ENCODE measurements at regions of chr18 and their contacts with region 1.

Region 1: GRCh38 chr18:31634331-31634713 is 42.6 kb downstream of the TTR start:
- DNase-seq: no peak
- H3K4me3 ChIP-seq: no peak overlapping the region
- H3K27ac ChIP-seq: no peak overlapping the region
- H3K4me1 ChIP-seq: no peaks in the 10 kb centered on the region
- H3K27me3 ChIP-seq: no peaks in the 10 kb centered on the region
- CTCF ChIP-seq: no peak
- POLR2A ChIP-seq: no peak

Region 2: GRCh38 chr18:29726646-29727045 is 1907.7 kb before region 1 on chr18:
- intact Hi-C with region 1: loop called (anchors 10 kb)
- DNase-seq: no peak
- H3K4me3 ChIP-seq: no peak overlapping the region
- H3K27ac ChIP-seq: no peak overlapping the region
- H3K4me1 ChIP-seq: no peaks in the 10 kb centered on the region
- H3K27me3 ChIP-seq: no peaks in the 10 kb centered on the region
- CTCF ChIP-seq: no peak
- POLR2A ChIP-seq: no peak

Region 3: GRCh38 chr18:31274915-31275314 is 359.4 kb before region 1 on chr18:
- intact Hi-C with region 1: no loop called
- DNase-seq: peak in 1 of 2 donors; percentile 18
- H3K4me3 ChIP-seq: no peak overlapping the region
- H3K27ac ChIP-seq: no peak overlapping the region
- H3K4me1 ChIP-seq: no peaks in the 10 kb centered on the region
- H3K27me3 ChIP-seq: no peaks in the 10 kb centered on the region
- CTCF ChIP-seq: no peak
- POLR2A ChIP-seq: no peak

Region 4: GRCh38 chr18:31774477-31774785 is 140.1 kb after region 1 on chr18:
- intact Hi-C with region 1: no loop called
- DNase-seq: no peak
- H3K4me3 ChIP-seq: no peak overlapping the region
- H3K27ac ChIP-seq: no peak overlapping the region
- H3K4me1 ChIP-seq: no peaks in the 10 kb centered on the region
- H3K27me3 ChIP-seq: no peaks in the 10 kb centered on the region
- CTCF ChIP-seq: no peak
- POLR2A ChIP-seq: no peak

Measured in uterus (tissue), 4 donors.